ENCODE measurements at regions of chr7 and their contacts with region 1.

Region 1: DNA sequence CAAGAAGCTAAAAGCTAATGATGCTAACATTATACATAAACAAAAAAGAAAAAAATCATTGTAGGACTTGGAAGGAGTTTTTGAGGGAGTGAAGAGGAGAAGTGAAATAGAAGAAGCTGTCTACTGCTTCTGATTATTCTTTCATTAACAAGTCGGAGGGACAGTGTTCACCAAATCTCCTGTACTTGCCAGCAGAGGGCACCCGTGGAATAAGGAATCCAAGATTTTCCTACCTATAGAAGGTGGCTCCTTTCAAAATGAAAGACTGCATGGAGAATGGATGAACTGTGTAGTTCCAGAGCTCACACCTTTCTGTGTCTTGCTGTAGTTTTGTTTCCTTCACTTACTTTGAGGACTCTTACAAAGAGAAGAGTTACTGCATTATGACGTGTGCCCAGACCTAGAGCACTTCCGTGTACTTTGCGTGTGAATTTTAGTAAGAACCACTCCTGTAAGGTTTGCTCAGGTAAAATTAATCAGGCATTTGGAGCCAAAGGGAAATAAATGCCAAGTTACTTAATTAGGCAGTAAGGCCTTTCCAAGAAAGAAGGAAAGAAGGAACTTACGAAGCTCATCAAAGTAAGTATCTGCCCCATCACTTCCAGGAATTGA is 145.1 kb downstream of the SEMA3D start:
- DNase-seq: peak; percentile 48
- ATAC-seq: peak; percentile 36
- H3K4me3 ChIP-seq: no peak overlapping the region
- H3K4me3 Mint-ChIP-seq: no peak overlapping the region
- H3K27ac ChIP-seq: no peak overlapping the region
- H3K27ac Mint-ChIP-seq: no peak overlapping the region
- H3K4me1 ChIP-seq: no peaks in the 10 kb centered on the region
- H3K4me1 Mint-ChIP-seq: peaks cover 1% of the 10 kb centered on the region
- H3K27me3 ChIP-seq: no peaks in the 10 kb centered on the region
- H3K27me3 Mint-ChIP-seq: no peaks in the 10 kb centered on the region
- CTCF ChIP-seq: peak; percentile 80

Region 2: GRCh38 chr7:84589012-84589411 is 452.7 kb before region 1 on chr7:
- CTCF ChIA-PET with region 1: no interaction called
- POLR2A ChIA-PET with region 1: no interaction called
- intact Hi-C with region 1: no loop called
- DNase-seq: no peak
- ATAC-seq: no peak
- H3K4me3 ChIP-seq: no peak overlapping the region
- H3K4me3 Mint-ChIP-seq: no peak overlapping the region
- H3K27ac ChIP-seq: no peak overlapping the region
- H3K27ac Mint-ChIP-seq: no peak overlapping the region
- H3K4me1 ChIP-seq: no peaks in the 10 kb centered on the region
- H3K4me1 Mint-ChIP-seq: no peaks in the 10 kb centered on the region
- H3K27me3 ChIP-seq: no peaks in the 10 kb centered on the region
- H3K27me3 Mint-ChIP-seq: no peaks in the 10 kb centered on the region
- CTCF ChIP-seq: no peak

Region 3: DNA sequence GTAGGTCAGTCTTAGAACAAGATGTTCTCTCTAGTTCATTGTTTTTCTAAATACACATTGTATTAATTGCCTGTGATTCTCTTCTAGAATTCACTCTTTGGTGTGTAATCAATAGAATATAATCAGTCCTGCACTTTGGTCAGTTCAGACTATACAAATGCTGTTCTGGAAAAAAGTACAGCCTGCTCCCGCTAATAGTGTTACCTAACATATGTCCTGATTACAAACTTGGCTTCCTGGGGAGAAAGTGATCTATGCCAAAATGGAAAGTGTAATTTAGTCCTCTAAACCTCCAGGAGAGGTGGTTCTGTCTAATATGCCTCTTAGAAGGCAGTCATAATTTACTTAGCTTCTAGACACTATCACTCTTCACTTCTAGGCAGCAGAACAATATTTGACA is 70.4 kb before region 1 on chr7:
- CTCF ChIA-PET with region 1: no interaction called
- POLR2A ChIA-PET with region 1: no interaction called
- intact Hi-C with region 1: no loop called
- DNase-seq: no peak
- ATAC-seq: no peak
- H3K4me3 ChIP-seq: no peak overlapping the region
- H3K4me3 Mint-ChIP-seq: no peak overlapping the region
- H3K27ac ChIP-seq: no peak overlapping the region
- H3K27ac Mint-ChIP-seq: no peak overlapping the region
- H3K4me1 ChIP-seq: no peaks in the 10 kb centered on the region
- H3K4me1 Mint-ChIP-seq: no peaks in the 10 kb centered on the region
- H3K27me3 ChIP-seq: no peaks in the 10 kb centered on the region
- H3K27me3 Mint-ChIP-seq: no peaks in the 10 kb centered on the region
- CTCF ChIP-seq: no peak

Region 4: GRCh38 chr7:85030893-85031292 is 10.8 kb before region 1 on chr7:
- CTCF ChIA-PET with region 1: interaction called, 10 read pairs
- POLR2A ChIA-PET with region 1: no interaction called
- intact Hi-C with region 1: no loop called
- DNase-seq: peak; percentile 29
- ATAC-seq: no peak
- H3K4me3 ChIP-seq: no peak overlapping the region
- H3K4me3 Mint-ChIP-seq: no peak overlapping the region
- H3K27ac ChIP-seq: no peak overlapping the region
- H3K27ac Mint-ChIP-seq: no peak overlapping the region
- H3K4me1 ChIP-seq: no peaks in the 10 kb centered on the region
- H3K4me1 Mint-ChIP-seq: no peaks in the 10 kb centered on the region
- H3K27me3 ChIP-seq: no peaks in the 10 kb centered on the region
- H3K27me3 Mint-ChIP-seq: no peaks in the 10 kb centered on the region
- CTCF ChIP-seq: peak; percentile 72

Region 5: GRCh38 chr7:85186521-85187241 is 145.0 kb after region 1 on chr7 and contains the start of gene SEMA3D:
- CTCF ChIA-PET with region 1: interaction called, 9 read pairs
- POLR2A ChIA-PET with region 1: no interaction called
- intact Hi-C with region 1: loop called (anchors 2 kb)
- DNase-seq: peak; percentile 81
- ATAC-seq: peak; percentile 89
- H3K4me3 ChIP-seq: peak within 1 kb of the TSS; percentile 59 to 87 (median 74)
- H3K4me3 Mint-ChIP-seq: peak within 1 kb of the TSS; percentile 80
- H3K27ac ChIP-seq: no peak within 1 kb of the TSS
- H3K27ac Mint-ChIP-seq: no peak within 1 kb of the TSS
- H3K4me1 ChIP-seq: peaks cover 12 to 22% of the 10 kb centered on the region in 2 donors
- H3K4me1 Mint-ChIP-seq: peaks cover 18% of the 10 kb centered on the region
- H3K27me3 ChIP-seq: peaks cover 0 to 25% (median 5%) of the 10 kb centered on the region in 4 experiments
- H3K27me3 Mint-ChIP-seq: peaks cover 44% of the 10 kb centered on the region
- CTCF ChIP-seq: peak; percentile 76
- total RNA-seq, gene SEMA3D: 0.36 and 0.59 TPM in 2 replicates

Region 6: DNA sequence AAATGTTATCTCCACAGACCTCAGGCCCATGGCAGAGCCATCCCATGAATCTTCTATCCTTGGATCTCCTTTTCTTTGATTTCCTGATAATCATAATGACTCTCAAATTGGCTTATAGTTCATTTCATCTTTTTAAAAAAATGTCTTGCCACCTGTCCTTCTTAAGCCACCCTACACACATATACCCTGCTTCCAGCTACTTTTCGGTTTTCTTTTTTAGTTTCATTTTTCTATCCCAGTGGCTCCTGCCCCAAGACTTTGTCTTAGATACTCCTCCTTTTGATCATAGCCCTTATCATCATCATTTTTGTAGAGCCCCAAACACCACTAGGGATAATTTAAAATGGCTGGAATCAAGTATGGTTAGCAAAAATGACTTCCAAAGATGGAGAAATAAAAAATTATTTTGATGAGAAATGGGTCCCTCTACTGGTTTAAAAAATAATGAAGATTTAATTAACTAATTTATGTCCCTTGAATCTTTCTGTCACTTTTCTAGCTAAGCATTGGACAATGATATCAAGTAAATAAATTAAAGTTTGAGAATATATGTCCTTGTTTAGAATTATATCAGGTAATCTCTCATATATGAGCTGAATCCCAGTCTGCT is 422.4 kb after region 1 on chr7:
- CTCF ChIA-PET with region 1: interaction called, 78 read pairs
- POLR2A ChIA-PET with region 1: no interaction called
- intact Hi-C with region 1: loop called (anchors 1 kb)
- DNase-seq: peak; percentile 15
- ATAC-seq: no peak
- H3K4me3 ChIP-seq: peak overlapping the region in 1 of 5 experiments; percentile 8
- H3K4me3 Mint-ChIP-seq: no peak overlapping the region
- H3K27ac ChIP-seq: no peak overlapping the region
- H3K27ac Mint-ChIP-seq: no peak overlapping the region
- H3K4me1 ChIP-seq: no peaks in the 10 kb centered on the region
- H3K4me1 Mint-ChIP-seq: no peaks in the 10 kb centered on the region
- H3K27me3 ChIP-seq: no peaks in the 10 kb centered on the region
- H3K27me3 Mint-ChIP-seq: no peaks in the 10 kb centered on the region
- CTCF ChIP-seq: peak; percentile 65

Region 7: GRCh38 chr7:85554236-85555178 is 512.8 kb after region 1 on chr7:
- CTCF ChIA-PET with region 1: interaction called, 70 read pairs
- POLR2A ChIA-PET with region 1: no interaction called
- intact Hi-C with region 1: loop called (anchors 1 kb)
- DNase-seq: peak; percentile 58
- ATAC-seq: peak; percentile 43
- H3K4me3 ChIP-seq: no peak overlapping the region
- H3K4me3 Mint-ChIP-seq: no peak overlapping the region
- H3K27ac ChIP-seq: no peak overlapping the region
- H3K27ac Mint-ChIP-seq: no peak overlapping the region
- H3K4me1 ChIP-seq: no peaks in the 10 kb centered on the region
- H3K4me1 Mint-ChIP-seq: no peaks in the 10 kb centered on the region
- H3K27me3 ChIP-seq: no peaks in the 10 kb centered on the region
- H3K27me3 Mint-ChIP-seq: no peaks in the 10 kb centered on the region
- CTCF ChIP-seq: peak; percentile 84

Region 8: GRCh38 chr7:85750454-85750949 is 708.8 kb after region 1 on chr7:
- CTCF ChIA-PET with region 1: no interaction called
- POLR2A ChIA-PET with region 1: no interaction called
- intact Hi-C with region 1: loop called (anchors 5 kb)
- DNase-seq: peak; percentile 15
- ATAC-seq: no peak
- H3K4me3 ChIP-seq: no peak overlapping the region
- H3K4me3 Mint-ChIP-seq: no peak overlapping the region
- H3K27ac ChIP-seq: no peak overlapping the region
- H3K27ac Mint-ChIP-seq: no peak overlapping the region
- H3K4me1 ChIP-seq: no peaks in the 10 kb centered on the region
- H3K4me1 Mint-ChIP-seq: no peaks in the 10 kb centered on the region
- H3K27me3 ChIP-seq: no peaks in the 10 kb centered on the region
- H3K27me3 Mint-ChIP-seq: no peaks in the 10 kb centered on the region
- CTCF ChIP-seq: peak; percentile 37